Left lung (tissue), 14 donors: ENCODE measurements at regions of chr6 and their contacts with region 1.

Region 1: DNA sequence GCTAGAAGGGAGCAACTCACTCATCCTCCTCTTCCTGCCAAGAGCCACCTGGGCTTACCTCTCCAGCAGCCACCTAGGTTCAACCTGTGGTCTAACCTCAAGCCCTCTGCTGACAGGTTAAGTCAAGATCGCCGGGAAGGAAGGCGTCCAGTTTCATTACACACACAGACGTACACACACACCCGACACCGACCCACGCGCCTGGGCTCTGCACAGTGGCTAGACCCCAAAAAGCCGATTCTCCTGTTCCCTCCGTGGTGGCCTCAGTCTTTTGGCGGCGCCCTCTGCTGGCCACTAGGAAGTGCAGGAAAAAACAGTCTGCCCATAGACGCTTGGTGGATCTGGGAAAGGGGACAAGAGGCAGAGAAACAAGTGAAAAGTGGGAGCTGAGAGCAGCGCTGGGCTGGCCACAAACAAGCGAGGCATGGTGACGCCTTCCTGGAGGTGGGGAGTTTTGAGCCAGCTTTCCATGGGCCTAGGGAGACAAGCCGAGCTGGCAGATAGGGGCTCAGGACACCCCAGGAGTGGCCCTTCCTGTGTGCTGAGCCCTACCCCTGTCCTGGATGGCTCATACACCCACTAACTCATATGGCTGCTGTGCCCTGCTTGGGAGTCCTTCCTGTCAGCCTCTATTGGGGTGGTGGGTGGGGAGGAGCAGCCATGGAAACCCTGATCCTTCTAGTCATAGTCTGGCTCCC is 52.7 kb downstream of the MRPL14 start:
- DNase-seq: peak; percentile 71 to 90 (median 82)
- ATAC-seq: peak; percentile 73
- H3K4me3 ChIP-seq: no peak overlapping the region
- H3K27ac ChIP-seq: peak overlapping the region in 1 of 2 donors; percentile 33
- H3K4me1 ChIP-seq: peaks cover 14 to 35% of the 10 kb centered on the region in 2 donors
- H3K27me3 ChIP-seq: peaks cover 0 to 69% of the 10 kb centered on the region in 2 donors
- CTCF ChIP-seq: peak; percentile 78 to 85

Region 2: GRCh38 chr6:43667245-43668150 is 407.1 kb before region 1 on chr6:
- intact Hi-C with region 1: loop called in 1 of 2 experiments (anchors 5 kb)
- DNase-seq: peak; percentile 80 to 92 (median 84)
- ATAC-seq: peak; percentile 85
- H3K4me3 ChIP-seq: no peak overlapping the region
- H3K27ac ChIP-seq: peak overlapping the region in 1 of 2 donors; percentile 28
- H3K4me1 ChIP-seq: peaks cover 27 to 30% of the 10 kb centered on the region in 2 donors
- H3K27me3 ChIP-seq: no peaks in the 10 kb centered on the region
- CTCF ChIP-seq: peak; percentile 95 to 97

Region 3: GRCh38 chr6:43723737-43724295 is 350.8 kb before region 1 on chr6:
- intact Hi-C with region 1: loop called in 1 of 2 experiments (anchors 5 kb)
- DNase-seq: peak in 2 of 4 donors; percentile 82 to 84
- ATAC-seq: peak; percentile 88
- H3K4me3 ChIP-seq: no peak overlapping the region
- H3K27ac ChIP-seq: peak overlapping the region in 1 of 2 donors; percentile 49
- H3K4me1 ChIP-seq: peaks cover 16 to 32% of the 10 kb centered on the region in 2 donors
- H3K27me3 ChIP-seq: peaks cover 0 to 30% of the 10 kb centered on the region in 2 donors
- CTCF ChIP-seq: peak; percentile 40 to 68

Region 4: DNA sequence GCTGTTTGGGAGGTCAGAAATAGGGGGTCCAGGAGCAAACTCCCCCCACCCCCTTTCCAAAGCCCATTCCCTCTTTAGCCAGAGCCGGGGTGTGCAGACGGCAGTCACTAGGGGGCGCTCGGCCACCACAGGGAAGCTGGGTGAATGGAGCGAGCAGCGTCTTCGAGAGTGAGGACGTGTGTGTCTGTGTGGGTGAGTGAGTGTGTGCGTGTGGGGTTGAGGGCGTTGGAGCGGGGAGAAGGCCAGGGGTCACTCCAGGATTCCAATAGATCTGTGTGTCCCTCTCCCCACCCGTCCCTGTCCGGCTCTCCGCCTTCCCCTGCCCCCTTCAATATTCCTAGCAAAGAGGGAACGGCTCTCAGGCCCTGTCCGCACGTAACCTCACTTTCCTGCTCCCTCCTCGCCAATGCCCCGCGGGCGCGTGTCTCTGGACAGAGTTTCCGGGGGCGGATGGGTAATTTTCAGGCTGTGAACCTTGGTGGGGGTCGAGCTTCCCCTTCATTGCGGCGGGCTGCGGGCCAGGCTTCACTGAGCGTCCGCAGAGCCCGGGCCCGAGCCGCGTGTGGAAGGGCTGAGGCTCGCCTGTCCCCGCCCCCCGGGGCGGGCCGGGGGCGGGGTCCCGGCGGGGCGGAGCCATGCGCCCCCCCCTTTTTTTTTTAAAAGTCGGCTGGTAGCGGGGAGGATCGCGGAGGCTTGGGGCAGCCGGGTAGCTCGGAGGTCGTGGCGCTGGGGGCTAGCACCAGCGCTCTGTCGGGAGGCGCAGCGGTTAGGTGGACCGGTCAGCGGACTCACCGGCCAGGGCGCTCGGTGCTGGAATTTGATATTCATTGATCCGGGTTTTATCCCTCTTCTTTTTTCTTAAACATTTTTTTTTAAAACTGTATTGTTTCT is 304.8 kb before region 1 on chr6 and contains the start of gene VEGFA:
- intact Hi-C with region 1: loop called in 1 of 2 experiments (anchors 2 kb)
- DNase-seq: peak; percentile 92 to 98 (median 92)
- ATAC-seq: peak; percentile 79
- H3K4me3 ChIP-seq: peak within 1 kb of the TSS; percentile 83 to 93
- H3K27ac ChIP-seq: peak within 1 kb of the TSS; percentile 92 to 96
- H3K4me1 ChIP-seq: peaks cover 13 to 43% of the 10 kb centered on the region in 2 donors
- H3K27me3 ChIP-seq: no peaks in the 10 kb centered on the region
- CTCF ChIP-seq: peak; percentile 94 to 97
- polyA plus RNA-seq, gene VEGFA: 195 to 349 (median 326) TPM